Gastrocnemius medialis (tissue), 4 donors: ENCODE measurements at regions of chr6 and their contacts with region 1.

Region 1: DNA sequence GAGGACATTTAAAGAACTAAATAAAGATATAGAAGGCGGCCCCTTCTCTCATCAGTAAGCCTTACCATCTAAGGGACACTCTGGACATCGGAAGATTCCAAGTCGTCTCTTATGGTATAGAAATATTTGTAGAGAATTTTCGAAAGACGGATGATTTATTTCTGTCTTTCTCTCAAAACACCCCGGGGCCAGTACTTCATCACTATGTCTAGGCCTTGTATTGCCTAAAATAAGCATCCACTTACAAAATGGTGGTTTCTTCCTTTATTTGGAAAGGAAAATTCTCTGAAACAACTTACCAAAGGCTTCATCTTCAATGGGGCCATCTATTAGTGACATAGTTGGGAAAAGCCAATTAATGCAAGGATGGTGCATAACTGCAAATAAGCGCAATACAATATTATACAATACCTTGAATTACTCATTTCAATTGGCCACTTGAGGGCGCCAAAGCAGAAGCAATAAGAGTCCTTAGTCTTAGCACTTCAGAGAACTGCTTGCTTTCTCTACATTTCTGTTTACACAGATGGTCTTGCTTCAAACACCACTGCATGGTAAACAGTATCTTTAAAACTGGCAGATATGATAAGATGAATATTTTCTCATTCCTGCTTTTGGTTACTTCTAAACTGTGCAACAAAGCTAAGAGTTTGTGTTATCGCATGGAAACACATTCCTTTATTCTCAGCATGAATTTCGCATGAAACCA is 113.2 kb downstream of the VIP start:
- DNase-seq: peak; percentile 25 to 38
- ATAC-seq: peak; percentile 65 to 82
- H3K4me3 ChIP-seq: no peak overlapping the region
- H3K27ac ChIP-seq: no peak overlapping the region
- H3K4me1 ChIP-seq: no peaks in the 10 kb centered on the region
- H3K27me3 ChIP-seq: no peaks in the 10 kb centered on the region
- CTCF ChIP-seq: peak; percentile 50 to 73 (median 68)
- POLR2A ChIP-seq: no peak

Region 2: GRCh38 chr6:152267967-152268845 is 595.6 kb before region 1 on chr6:
- in situ Hi-C with region 1: no loop called
- intact Hi-C with region 1: no loop called
- DNase-seq: no peak
- ATAC-seq: peak in 1 of 2 donors; percentile 11
- H3K4me3 ChIP-seq: peak overlapping the region in 1 of 4 donors; percentile 22
- H3K27ac ChIP-seq: peak overlapping the region; percentile 71 to 84 (median 78)
- H3K4me1 ChIP-seq: peaks cover 40 to 45% of the 10 kb centered on the region in 2 donors
- H3K27me3 ChIP-seq: no peaks in the 10 kb centered on the region
- CTCF ChIP-seq: peak; percentile 32 to 70 (median 47)
- POLR2A ChIP-seq: no peak

Region 3: GRCh38 chr6:152879681-152880080 is 15.9 kb after region 1 on chr6:
- in situ Hi-C with region 1: no loop called
- intact Hi-C with region 1: no loop called
- DNase-seq: no peak
- ATAC-seq: no peak
- H3K4me3 ChIP-seq: no peak overlapping the region
- H3K27ac ChIP-seq: no peak overlapping the region
- H3K4me1 ChIP-seq: no peaks in the 10 kb centered on the region
- H3K27me3 ChIP-seq: no peaks in the 10 kb centered on the region
- CTCF ChIP-seq: no peak
- POLR2A ChIP-seq: no peak

Region 4: DNA sequence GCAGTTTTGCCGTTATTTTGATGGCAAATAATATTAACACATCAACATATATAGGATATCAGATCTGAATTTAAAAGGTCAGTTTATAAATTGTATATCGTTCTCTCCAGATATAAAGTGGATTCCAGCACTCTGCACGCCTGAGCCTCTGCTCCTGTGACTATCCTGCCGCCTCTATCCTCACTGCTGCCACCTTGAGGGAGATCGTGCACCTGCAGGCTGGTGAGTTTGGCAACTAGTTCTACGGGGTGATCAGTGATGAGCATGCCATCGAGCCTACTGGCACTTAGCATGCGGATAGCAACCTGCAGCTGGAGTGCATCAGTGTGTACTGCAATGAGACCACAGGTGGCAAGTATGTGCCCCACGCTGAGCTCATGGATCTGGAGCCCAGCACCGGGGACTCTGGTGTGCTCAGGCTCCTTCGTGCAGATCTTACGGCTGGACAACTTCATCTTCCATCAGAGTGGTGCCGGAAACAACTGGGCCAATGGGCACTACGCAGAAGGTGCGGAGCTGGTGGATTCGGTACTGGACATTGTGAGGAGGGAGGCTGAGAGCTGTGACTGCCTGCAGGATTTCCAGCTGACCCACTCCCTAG is 34.1 kb after region 1 on chr6:
- in situ Hi-C with region 1: no loop called
- intact Hi-C with region 1: loop called (anchors 1 kb)
- DNase-seq: peak; percentile 22 to 35
- ATAC-seq: peak; percentile 76 to 82
- H3K4me3 ChIP-seq: no peak overlapping the region
- H3K27ac ChIP-seq: no peak overlapping the region
- H3K4me1 ChIP-seq: peaks cover 5% of the 10 kb centered on the region in 2 donors
- H3K27me3 ChIP-seq: no peaks in the 10 kb centered on the region
- CTCF ChIP-seq: peak; percentile 41 to 84 (median 62)
- POLR2A ChIP-seq: no peak

Region 5: GRCh38 chr6:152948150-152948768 is 84.5 kb after region 1 on chr6:
- in situ Hi-C with region 1: loop called in 2 of 4 experiments (anchors 5 to 10 kb)
- intact Hi-C with region 1: loop called (anchors 1 kb)
- DNase-seq: no peak
- ATAC-seq: peak; percentile 78 to 89
- H3K4me3 ChIP-seq: peak overlapping the region in 1 of 4 donors; percentile 21
- H3K27ac ChIP-seq: no peak overlapping the region
- H3K4me1 ChIP-seq: peaks cover 4 to 9% of the 10 kb centered on the region in 2 donors
- H3K27me3 ChIP-seq: no peaks in the 10 kb centered on the region
- CTCF ChIP-seq: peak; percentile 52 to 72 (median 69)
- POLR2A ChIP-seq: no peak

Region 6: GRCh38 chr6:152957796-152958195 is 94.0 kb after region 1 on chr6:
- in situ Hi-C with region 1: loop called in 3 of 4 experiments (anchors 5 to 10 kb)
- intact Hi-C with region 1: no loop called
- DNase-seq: no peak
- ATAC-seq: no peak
- H3K4me3 ChIP-seq: no peak overlapping the region
- H3K27ac ChIP-seq: no peak overlapping the region
- H3K4me1 ChIP-seq: no peaks in the 10 kb centered on the region
- H3K27me3 ChIP-seq: no peaks in the 10 kb centered on the region
- CTCF ChIP-seq: no peak
- POLR2A ChIP-seq: no peak

Region 7: GRCh38 chr6:153023977-153024708 is 160.4 kb after region 1 on chr6:
- in situ Hi-C with region 1: loop called in 3 of 4 experiments (anchors 10 to 25 kb)
- intact Hi-C with region 1: loop called (anchors 2 kb)
- DNase-seq: no peak
- ATAC-seq: peak; percentile 80 to 91
- H3K4me3 ChIP-seq: no peak overlapping the region
- H3K27ac ChIP-seq: no peak overlapping the region
- H3K4me1 ChIP-seq: no peaks in the 10 kb centered on the region
- H3K27me3 ChIP-seq: no peaks in the 10 kb centered on the region
- CTCF ChIP-seq: peak; percentile 45 to 79 (median 69)
- POLR2A ChIP-seq: no peak

Region 8: DNA sequence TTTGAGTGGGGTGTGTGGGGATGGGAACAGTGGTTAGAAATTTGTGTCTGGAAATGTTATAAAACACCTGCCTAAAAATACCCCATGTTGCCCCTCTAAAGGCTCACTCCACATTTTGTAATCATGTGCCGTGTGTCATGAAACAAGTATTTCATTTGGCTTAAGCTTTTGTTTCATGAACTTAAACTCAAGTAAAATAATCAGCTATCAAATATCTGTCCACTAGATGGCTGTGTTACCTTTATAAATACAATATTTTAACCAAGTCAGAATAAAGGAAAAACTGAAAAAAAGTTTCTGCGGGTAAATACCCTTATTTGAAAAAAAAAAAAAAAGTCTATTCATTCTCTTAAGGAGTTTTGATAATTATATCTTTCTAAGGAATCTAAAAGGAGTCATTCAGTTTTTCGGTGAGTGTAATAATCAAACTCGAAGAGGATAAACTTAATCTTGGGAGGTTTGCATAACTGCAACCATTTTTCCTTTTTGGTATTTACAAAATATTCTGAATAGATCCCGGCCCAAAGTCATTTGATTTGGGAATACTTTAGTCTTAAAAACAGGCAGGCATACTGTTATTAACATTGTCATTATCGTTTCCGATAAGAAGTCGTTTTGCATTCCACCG is 168.6 kb after region 1 on chr6:
- in situ Hi-C with region 1: loop called in 3 of 4 experiments (anchors 10 to 25 kb)
- intact Hi-C with region 1: no loop called
- DNase-seq: no peak
- ATAC-seq: no peak
- H3K4me3 ChIP-seq: no peak overlapping the region
- H3K27ac ChIP-seq: no peak overlapping the region
- H3K4me1 ChIP-seq: no peaks in the 10 kb centered on the region
- H3K27me3 ChIP-seq: no peaks in the 10 kb centered on the region
- CTCF ChIP-seq: peak in 2 of 5 experiments; percentile 14 to 39
- POLR2A ChIP-seq: no peak